ENCODE measurements at regions of chr13 and their contacts with region 1.

Region 1: GRCh38 chr13:109778102-109778542 is 8.3 kb downstream of the IRS2 start:
- DNase-seq: no peak
- H3K4me3 Mint-ChIP-seq: no peak overlapping the region
- H3K27ac Mint-ChIP-seq: peak overlapping the region; percentile 15
- H3K4me1 Mint-ChIP-seq: peaks cover 59% of the 10 kb centered on the region
- H3K27me3 Mint-ChIP-seq: no peaks in the 10 kb centered on the region

Region 2: GRCh38 chr13:109256866-109257760 is 521.0 kb before region 1 on chr13:
- intact Hi-C with region 1: no loop called
- DNase-seq: no peak
- H3K4me3 Mint-ChIP-seq: no peak overlapping the region
- H3K27ac Mint-ChIP-seq: no peak overlapping the region
- H3K4me1 Mint-ChIP-seq: no peaks in the 10 kb centered on the region
- H3K27me3 Mint-ChIP-seq: no peaks in the 10 kb centered on the region

Region 3: DNA sequence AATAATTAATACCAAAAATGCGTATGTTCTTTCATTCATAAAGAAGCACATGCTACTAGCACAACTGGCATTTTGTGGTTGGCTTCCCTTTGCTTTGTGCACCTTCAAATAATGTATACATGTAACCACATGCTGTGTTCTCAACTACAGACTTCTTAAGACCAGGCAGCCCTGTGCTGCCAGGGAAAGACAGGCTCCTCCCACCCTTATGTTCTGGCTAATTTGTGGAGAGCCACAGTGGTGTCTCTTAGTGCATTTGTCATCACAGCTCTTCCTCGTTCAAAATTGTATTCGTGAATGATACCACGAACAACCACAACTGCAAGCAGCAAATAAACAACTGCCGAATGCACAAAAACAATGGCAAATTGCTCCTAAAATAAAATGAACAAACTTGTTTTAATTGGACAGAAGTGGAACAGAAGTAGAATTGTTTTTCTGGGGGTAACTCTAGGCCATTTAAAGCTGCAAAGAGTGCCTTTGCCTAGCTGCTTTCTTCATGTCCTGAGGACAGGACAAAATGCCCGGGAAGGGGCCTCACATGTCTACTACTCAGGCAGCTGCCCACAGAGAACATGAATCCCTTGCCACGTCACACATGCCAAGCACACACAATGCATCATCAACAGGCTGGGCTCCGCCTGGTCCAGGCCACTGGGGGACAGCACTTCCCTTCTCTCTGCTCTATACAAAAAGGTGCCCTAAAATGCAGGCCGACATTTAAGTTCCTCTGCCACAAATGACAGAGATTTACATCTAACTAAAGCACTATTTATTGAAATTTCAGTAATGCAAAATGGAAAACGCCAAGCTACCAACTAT is 13.4 kb before region 1 on chr13:
- intact Hi-C with region 1: loop called (anchors 2 kb)
- DNase-seq: no peak
- H3K4me3 Mint-ChIP-seq: peak overlapping the region; percentile 2
- H3K27ac Mint-ChIP-seq: peak overlapping the region; percentile 48
- H3K4me1 Mint-ChIP-seq: peaks cover 17% of the 10 kb centered on the region
- H3K27me3 Mint-ChIP-seq: no peaks in the 10 kb centered on the region

Region 4: DNA sequence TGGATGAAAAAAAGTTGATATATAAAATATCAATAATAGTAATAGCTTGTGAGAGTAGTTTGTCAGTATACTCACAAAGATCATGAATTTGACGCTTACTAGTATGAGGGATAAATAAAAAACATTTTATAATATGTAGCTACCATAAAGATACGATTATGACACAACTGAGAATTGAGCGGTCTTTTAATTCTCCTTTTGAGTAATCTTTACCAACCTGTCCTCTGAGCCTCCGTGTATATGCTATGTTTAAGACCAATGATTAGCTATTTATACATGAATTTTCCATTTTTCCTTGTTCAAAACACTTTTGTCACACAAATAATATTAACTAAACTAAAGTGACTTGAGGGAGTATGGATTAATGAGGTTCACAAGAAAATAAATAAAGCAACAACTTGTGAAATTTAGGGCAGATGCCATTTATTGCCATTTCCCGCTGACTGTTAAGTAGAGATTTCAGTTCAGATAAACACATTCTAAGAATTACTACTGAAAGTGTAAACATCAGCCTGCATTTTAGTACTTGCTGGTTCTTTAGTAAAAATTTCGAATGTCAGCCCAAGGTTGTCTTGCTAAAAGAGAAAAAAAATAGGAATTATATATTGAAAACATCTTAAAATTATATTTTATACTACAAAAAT is 14.4 kb after region 1 on chr13:
- intact Hi-C with region 1: loop called (anchors 2 kb)
- DNase-seq: no peak
- H3K4me3 Mint-ChIP-seq: peak overlapping the region; percentile 56
- H3K27ac Mint-ChIP-seq: peak overlapping the region; percentile 83
- H3K4me1 Mint-ChIP-seq: peaks cover 67% of the 10 kb centered on the region
- H3K27me3 Mint-ChIP-seq: peaks cover 31% of the 10 kb centered on the region

Region 5: DNA sequence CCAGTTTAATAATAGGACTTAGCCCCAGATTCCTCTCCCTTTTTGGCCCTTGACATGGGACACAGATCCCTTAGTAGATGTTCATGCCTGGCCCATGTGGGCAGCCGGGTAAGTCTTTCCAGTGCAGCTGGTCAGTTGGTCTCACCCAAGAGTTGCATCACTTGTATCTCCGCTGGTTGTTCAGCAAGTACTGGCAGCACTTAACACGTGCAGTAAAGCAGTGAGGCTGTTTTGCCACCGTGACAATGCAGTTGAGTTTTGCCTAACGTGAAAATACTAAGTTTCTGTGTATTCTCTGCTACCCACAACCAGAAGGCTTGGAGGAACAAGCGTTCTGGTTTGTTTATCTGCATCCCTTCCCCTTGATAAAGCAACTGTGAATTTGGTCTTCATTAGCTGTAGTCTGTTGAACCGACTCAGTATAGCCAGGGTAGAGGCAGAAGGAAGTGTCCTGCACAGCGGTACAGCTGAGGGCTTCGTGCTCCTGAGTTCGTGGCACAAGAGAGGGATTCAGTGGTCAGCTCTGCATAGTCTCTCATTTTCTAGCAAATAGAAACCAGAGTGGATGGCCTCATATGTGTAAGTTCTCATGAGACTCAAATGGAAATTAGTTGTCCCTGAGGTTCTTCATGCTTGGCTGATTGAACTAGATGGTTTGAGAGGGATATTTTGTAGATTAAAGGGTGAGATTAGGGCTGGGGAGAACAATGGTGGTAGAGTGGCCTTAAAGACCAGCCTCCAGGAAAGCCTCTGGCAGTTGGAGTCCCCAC is 1387.3 kb after region 1 on chr13:
- intact Hi-C with region 1: no loop called
- DNase-seq: no peak
- H3K4me3 Mint-ChIP-seq: no peak overlapping the region
- H3K27ac Mint-ChIP-seq: peak overlapping the region; percentile 44
- H3K4me1 Mint-ChIP-seq: peaks cover 36% of the 10 kb centered on the region
- H3K27me3 Mint-ChIP-seq: no peaks in the 10 kb centered on the region